ENCODE measurements at regions of chr2 and their contacts with region 1.

Region 1: GRCh38 chr2:218360447-218360846 is 3.8 kb downstream of the CATIP start:
- DNase-seq: no peak
- H3K4me3 ChIP-seq: no peak overlapping the region
- CTCF ChIP-seq: no peak

Region 2: DNA sequence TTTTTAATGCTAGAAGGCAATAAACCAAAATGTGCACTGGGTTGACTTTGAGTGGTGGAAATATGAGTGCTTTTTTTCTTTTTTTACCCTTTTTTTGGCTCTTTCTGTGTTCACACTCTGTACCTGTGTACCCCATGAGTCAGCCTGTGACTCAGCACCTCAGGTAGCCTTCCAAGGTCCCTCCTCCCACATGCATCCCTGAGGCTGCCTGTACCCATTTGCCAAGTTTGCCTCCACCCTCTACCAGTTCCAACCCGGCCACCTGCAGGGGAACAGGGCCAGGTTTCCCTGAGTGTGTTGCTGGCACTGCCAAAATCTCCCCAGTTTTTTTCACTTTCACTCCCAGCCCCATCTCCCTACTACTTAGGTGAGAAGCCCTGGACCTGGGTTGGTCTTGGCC is 207.7 kb before region 1 on chr2:
- CTCF ChIA-PET with region 1: no interaction called
- POLR2A ChIA-PET with region 1: no interaction called
- DNase-seq: no peak
- H3K4me3 ChIP-seq: no peak overlapping the region
- CTCF ChIP-seq: no peak

Region 3: GRCh38 chr2:218286570-218287459 is 73.6 kb before region 1 on chr2:
- CTCF ChIA-PET with region 1: interaction called, 117 read pairs
- POLR2A ChIA-PET with region 1: no interaction called
- DNase-seq: peak; percentile 90
- H3K4me3 ChIP-seq: peak overlapping the region; percentile 56
- CTCF ChIP-seq: no peak

Region 4: GRCh38 chr2:218301176-218301819 is 59.1 kb before region 1 on chr2:
- CTCF ChIA-PET with region 1: interaction called, 117 read pairs
- POLR2A ChIA-PET with region 1: no interaction called
- DNase-seq: no peak
- H3K4me3 ChIP-seq: no peak overlapping the region
- CTCF ChIP-seq: peak; percentile 88

Region 5: DNA sequence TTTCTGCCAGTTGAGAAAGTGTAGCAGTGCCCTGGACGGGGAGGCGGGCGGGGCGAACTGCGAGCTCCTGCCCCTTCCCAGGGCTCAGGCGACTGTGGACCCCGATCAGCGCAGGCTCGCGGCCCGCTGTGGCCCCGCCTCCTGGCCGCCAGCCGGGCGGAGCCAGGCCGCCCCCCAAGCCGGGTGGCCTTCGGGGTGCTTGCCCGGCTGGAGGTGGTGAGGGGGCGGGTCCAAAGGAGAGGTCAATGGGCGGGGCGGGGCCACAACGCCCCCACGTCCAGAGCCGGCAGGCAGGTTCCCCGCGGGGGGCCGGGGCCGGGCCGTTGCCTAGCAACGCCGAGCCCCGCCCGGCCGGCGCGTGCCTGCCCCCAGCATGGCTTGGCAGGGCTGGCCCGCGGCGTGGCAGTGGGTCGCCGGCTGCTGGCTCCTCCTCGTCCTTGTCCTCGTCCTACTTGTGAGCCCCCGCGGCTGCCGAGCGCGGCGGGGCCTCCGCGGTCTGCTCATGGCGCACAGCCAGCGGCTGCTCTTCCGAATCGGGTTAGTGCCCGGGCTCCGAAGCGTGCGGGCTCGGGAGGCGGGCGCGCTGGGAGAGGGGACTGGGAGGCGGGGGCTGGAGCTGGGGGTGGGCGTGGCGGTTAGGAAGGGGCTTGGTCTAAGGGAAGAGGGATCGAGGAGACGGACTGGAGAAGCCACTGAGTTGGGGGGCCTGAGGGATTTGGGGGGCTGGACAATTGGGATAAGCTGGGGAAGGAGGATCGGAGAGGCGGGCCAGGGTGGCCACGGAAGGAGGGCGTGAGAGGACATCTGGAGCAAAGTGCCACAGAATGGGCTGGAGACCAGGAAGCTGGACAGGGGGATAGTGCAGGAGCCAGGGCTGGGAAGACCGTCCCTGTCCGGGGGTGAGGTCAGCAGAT is 37.3 kb before region 1 on chr2:
- CTCF ChIA-PET with region 1: interaction called, 22 read pairs
- POLR2A ChIA-PET with region 1: no interaction called
- DNase-seq: no peak
- H3K4me3 ChIP-seq: peak overlapping the region; percentile 65
- CTCF ChIP-seq: no peak

Region 6: DNA sequence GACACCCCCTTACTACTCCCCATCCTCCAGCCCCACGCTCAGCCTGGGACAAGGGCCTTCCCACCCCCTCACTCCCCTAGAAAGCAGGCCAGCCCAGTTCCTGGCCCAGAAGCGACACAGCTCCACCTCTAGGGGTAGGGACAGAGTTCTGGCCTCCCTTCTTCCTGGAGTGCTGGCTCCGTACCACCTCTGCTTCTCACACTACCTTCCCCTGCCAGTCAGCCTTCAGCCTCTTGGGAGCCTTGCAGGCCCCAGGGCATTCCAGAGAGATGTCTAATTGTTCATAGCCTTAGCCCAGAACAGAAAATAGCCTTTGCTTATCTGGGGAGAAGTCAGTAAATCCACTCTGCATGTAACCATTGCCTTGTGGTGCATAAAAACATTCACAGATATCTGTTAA is 16.9 kb before region 1 on chr2:
- CTCF ChIA-PET with region 1: interaction called, 33 read pairs
- POLR2A ChIA-PET with region 1: no interaction called
- DNase-seq: peak; percentile 29
- H3K4me3 ChIP-seq: no peak overlapping the region
- CTCF ChIP-seq: no peak

Region 7: GRCh38 chr2:218618102-218618860 is 257.8 kb after region 1 on chr2:
- CTCF ChIA-PET with region 1: no interaction called
- POLR2A ChIA-PET with region 1: no interaction called
- DNase-seq: no peak
- H3K4me3 ChIP-seq: no peak overlapping the region
- CTCF ChIP-seq: no peak

Measured in AG04449 (cell line).